ENCODE measurements at regions of chr1 and their contacts with region 1.

Region 1: DNA sequence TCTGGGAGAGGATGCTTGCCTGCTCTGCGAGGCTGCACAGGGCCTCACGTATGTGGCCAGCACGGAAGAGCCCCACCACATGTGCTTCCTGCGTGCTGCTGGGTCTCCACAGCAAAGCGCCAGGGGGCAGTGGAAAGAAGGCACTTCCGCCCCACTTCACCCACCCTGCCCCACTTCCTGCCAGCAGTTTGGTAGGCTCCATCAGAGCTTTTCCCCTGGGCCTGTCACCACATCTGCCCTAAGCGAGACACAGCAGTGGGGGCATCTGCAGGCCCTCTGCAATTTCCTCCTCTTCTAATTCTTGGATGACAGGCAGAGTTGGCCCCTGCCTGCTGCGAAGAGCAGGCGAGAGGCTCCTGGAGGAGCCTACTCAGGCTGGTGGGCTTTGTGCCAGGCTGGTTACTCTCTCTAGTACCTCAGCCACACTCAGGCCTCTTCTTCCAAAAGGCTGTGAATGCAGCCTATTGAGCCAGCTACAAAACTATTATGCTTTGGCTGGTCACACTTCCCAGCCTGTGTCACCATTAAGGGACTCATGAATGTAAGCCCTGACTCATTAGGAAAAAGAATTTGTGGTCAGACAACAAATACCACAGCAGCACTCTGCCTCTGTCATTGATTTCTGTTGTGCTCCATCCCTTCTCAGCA is 25.0 kb downstream of the CD244 start:
- DNase-seq: peak; percentile 79
- H3K4me3 Mint-ChIP-seq: peak overlapping the region; percentile 47
- H3K27ac Mint-ChIP-seq: peak overlapping the region; percentile 94
- H3K4me1 Mint-ChIP-seq: peaks cover 61% of the 10 kb centered on the region
- H3K27me3 Mint-ChIP-seq: no peaks in the 10 kb centered on the region

Region 2: DNA sequence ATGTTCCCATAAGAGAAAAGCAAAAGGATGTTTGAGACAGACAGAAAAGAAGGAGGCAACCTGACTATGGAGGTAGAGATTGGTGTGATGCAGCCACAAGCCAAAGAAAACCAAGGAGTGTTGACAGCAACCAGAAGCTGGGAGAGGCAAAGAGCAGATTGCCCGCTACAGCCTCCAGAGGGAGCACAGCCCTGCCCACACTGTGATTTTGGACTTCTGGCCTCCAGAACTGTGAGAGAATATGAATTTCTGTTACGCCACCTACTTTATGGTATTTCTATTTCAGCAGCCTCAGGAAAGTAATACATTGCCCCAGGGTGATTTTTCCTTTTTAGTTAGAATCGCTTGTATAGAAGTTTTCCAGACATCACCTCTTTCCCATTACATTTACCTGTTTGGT is 343.1 kb before region 1 on chr1:
- intact Hi-C with region 1: no loop called
- DNase-seq: no peak
- H3K4me3 Mint-ChIP-seq: no peak overlapping the region
- H3K27ac Mint-ChIP-seq: no peak overlapping the region
- H3K4me1 Mint-ChIP-seq: peaks cover 25% of the 10 kb centered on the region
- H3K27me3 Mint-ChIP-seq: no peaks in the 10 kb centered on the region

Region 3: GRCh38 chr1:160681067-160681890 is 156.4 kb before region 1 on chr1:
- intact Hi-C with region 1: loop called (anchors 1 kb)
- DNase-seq: peak; percentile 78
- H3K4me3 Mint-ChIP-seq: peak overlapping the region; percentile 60
- H3K27ac Mint-ChIP-seq: peak overlapping the region; percentile 85
- H3K4me1 Mint-ChIP-seq: peaks cover 81% of the 10 kb centered on the region
- H3K27me3 Mint-ChIP-seq: no peaks in the 10 kb centered on the region

Region 4: DNA sequence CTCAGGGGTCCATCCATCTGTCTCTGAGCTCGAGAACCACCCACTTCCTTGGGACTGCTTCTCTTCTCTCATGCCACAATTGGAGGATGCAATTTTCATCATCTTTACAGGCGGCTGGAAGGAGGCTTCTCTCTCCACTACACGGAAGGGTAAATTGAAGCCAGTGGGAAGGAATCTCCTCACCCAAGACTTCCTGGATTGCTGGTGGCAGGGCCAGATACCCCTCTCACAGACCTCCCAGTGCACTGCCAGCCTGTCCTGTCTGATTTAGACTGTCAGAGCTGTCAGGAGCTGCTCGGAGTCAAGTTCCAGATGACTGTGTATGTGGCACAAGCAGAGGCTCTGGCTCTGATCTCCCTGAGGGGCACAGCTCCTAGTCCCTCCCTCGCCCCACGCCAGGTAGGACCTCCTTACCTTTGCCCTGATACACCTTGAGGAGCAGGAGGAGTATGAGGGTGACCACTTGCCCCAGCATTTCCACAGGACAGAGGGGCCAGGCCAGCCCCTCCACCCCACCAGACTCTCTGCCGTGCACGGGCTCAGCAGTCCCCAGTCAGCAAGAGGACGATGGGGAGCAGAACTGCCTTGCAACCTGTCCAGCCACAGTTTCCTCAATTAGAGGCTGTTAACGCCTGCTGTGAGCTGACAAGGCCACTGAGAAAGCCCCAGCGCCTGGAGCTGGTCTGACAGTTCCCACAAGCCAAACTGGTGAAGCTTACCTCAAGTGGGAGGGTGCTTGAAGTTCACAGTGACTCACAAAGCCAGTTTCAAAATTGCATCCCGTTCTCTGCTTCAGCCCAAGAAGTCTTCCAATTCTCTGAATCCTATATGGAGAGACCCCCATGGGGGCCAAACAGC is 24.8 kb after region 1 on chr1 and contains the start of gene CD244:
- intact Hi-C with region 1: loop called (anchors 1 kb)
- DNase-seq: peak; percentile 43
- H3K4me3 Mint-ChIP-seq: peak within 1 kb of the TSS; percentile 17
- H3K27ac Mint-ChIP-seq: no peak within 1 kb of the TSS
- H3K4me1 Mint-ChIP-seq: peaks cover 26% of the 10 kb centered on the region
- H3K27me3 Mint-ChIP-seq: peaks cover 6% of the 10 kb centered on the region
- total RNA-seq, gene CD244: 0.13 TPM in 1 of 2 replicates, not detected in the other

Region 5: GRCh38 chr1:160884579-160884978 is 46.9 kb after region 1 on chr1:
- intact Hi-C with region 1: loop called (anchors 1 kb)
- DNase-seq: no peak
- H3K4me3 Mint-ChIP-seq: no peak overlapping the region
- H3K27ac Mint-ChIP-seq: no peak overlapping the region
- H3K4me1 Mint-ChIP-seq: peaks cover 7% of the 10 kb centered on the region
- H3K27me3 Mint-ChIP-seq: peaks cover 11% of the 10 kb centered on the region

Region 6: GRCh38 chr1:161098210-161099068 is 260.8 kb after region 1 on chr1 and contains the start of gene KLHDC9:
- intact Hi-C with region 1: loop called (anchors 5 kb)
- DNase-seq: peak; percentile 68
- H3K4me3 Mint-ChIP-seq: peak within 1 kb of the TSS; percentile 80
- H3K27ac Mint-ChIP-seq: peak within 1 kb of the TSS; percentile 96
- H3K4me1 Mint-ChIP-seq: peaks cover 39% of the 10 kb centered on the region
- H3K27me3 Mint-ChIP-seq: peaks cover 2% of the 10 kb centered on the region
- total RNA-seq, gene KLHDC9: not detected in 2 replicates

Measured in activated T-helper 1 cell treated with anti-CD3 and anti-CD28 coated beads, Interleukin-12 subunit alpha, Interleukin-12 subunit beta, Interleukin-2, Interleukin-4 antibody, amounts not matched to agents 30 ng/mL and 10 ng/mL and 1 ng/mL, durations not matched to agents 14 hours and 24 hours and 36 hours (primary cell).